Cardiac septum (tissue), 1 donor: ENCODE measurements at regions of chr16 and their contacts with region 1.

Region 1: DNA sequence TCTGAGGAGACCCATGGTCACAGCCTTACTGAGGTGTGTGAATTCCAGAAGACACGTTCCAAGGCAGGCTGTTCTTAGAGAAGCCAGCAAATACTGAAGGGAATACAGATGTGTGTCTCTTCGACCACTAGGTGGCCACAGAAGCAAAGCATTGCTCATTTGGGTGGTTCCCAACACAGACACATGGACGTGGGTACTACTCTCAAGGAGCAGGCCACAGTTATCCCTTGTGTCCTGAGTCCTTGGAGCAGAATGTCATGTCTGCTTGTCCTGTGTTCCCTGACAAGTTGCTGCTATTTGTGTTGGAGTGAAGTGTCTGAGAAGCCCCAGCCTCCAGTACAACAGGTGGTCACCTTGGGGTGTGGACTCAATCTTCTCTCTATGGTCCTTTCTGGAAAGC is 30.3 kb downstream of the HMOX2 start:
- DNase-seq: no peak

Region 2: GRCh38 chr16:3971261-3971660 is 535.2 kb before region 1 on chr16:
- intact Hi-C with region 1: no loop called
- DNase-seq: no peak

Region 3: DNA sequence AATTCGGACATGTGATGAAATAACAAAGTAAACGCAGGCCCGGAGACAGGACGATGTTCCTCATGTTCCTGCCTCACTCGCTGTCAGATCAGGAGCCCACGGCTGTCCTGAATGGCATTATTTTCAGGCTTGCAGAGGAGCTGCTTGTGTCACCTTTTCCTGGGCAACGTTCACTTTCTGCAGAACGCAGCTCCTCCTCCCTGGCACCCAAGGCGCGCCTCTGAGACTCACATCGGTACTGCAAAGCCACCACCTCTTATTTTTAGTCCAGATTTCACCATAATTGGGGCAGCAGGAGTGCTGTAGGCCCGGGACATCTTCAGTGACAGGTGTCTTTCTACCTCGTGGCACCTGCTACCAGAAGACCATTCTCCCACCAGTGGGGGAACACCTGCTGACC is 41.7 kb after region 1 on chr16:
- intact Hi-C with region 1: loop called (anchors 2 kb)
- DNase-seq: no peak

Region 4: DNA sequence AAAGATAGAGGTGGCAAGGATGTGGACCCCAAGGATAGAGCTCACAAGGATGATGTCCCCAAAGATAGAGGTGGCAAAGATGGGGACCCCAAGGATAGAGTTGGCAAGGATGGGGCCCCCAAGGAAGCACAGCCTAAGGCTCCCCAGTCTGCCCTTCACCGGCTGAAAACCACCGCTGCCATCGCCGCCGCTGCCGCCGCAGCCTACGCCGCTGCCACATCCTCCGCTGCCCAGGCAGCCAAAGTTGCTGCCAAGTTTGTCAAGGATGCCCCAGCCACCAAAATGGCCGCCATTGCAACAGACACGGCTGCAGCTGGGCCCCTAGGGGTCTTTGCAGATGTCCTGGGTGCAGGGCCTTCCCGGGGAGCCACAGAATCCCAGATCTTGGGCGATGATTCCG is 69.6 kb after region 1 on chr16:
- intact Hi-C with region 1: no loop called
- DNase-seq: no peak

Region 5: DNA sequence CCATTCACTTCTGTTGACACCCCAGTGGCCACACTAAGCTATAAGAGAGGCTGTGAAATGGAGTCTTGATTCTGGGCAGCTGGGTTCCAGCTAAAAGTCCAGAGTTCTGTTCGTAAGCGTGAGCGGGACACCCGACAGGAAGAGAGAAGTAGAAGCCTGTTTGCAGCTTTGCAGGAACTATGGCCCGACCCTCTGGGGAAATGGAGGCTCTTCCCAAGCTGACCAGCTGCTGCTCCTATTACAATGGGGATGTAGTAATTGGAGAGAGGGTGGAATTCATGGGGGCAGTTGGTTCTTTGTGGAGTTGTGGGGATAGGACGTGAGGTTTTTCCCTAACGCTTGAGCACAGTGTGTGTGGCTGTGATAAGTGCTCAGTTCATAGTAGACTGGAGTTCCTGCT is 79.8 kb after region 1 on chr16:
- intact Hi-C with region 1: loop called (anchors 5 kb)
- DNase-seq: no peak